ENCODE measurements at regions of chr12 and their contacts with region 1.

Region 1: GRCh38 chr12:116277393-116278278 is at the start of gene MED13L:
- DNase-seq: no peak
- ATAC-seq: peak; percentile 82
- H3K4me3 ChIP-seq: peak within 1 kb of the TSS; percentile 81
- H3K27ac ChIP-seq: peak within 1 kb of the TSS; percentile 43; the same call in 1 of the 2 replicates
- H3K4me1 ChIP-seq: no peaks in the 10 kb centered on the region
- H3K27me3 ChIP-seq: peaks cover 0 to 10% of the 10 kb centered on the region in 2 experiments; a peak in 2 of 4 replicates
- CTCF ChIP-seq: peak in 2 of 3 experiments; percentile 6 to 28; a peak in 2 of 6 replicates
- EP300 ChIP-seq: no peak
- POLR2A ChIP-seq: peak; percentile 75
- RAD21 ChIP-seq: 0 out of 2 replicates have a peak, but pooled peaks have one; percentile 25
- polyA plus RNA-seq, gene MED13L: 3.7 to 7.5 TPM

Region 2: GRCh38 chr12:116314477-116314876 is 36.8 kb after region 1 on chr12:
- CTCF ChIA-PET with region 1: no interaction called
- POLR2A ChIA-PET with region 1: no interaction called
- RAD21 ChIA-PET with region 1: no interaction called
- SMC1A ChIA-PET with region 1: no interaction called
- in situ Hi-C with region 1: no loop called
- intact Hi-C with region 1: loop called (anchors 2 kb)
- DNase-seq: no peak
- ATAC-seq: no peak
- H3K4me3 ChIP-seq: no peak overlapping the region
- H3K27ac ChIP-seq: no peak overlapping the region
- H3K4me1 ChIP-seq: peaks cover under 1% of the 10 kb centered on the region; the same call in 1 of the 2 replicates
- H3K27me3 ChIP-seq: peaks cover 2 to 3% of the 10 kb centered on the region in 2 experiments
- CTCF ChIP-seq: no peak
- EP300 ChIP-seq: no peak
- POLR2A ChIP-seq: no peak
- RAD21 ChIP-seq: no peak

Region 3: GRCh38 chr12:116358893-116359761 is 81.5 kb after region 1 on chr12:
- CTCF ChIA-PET with region 1: no interaction called
- POLR2A ChIA-PET with region 1: no interaction called
- RAD21 ChIA-PET with region 1: no interaction called
- SMC1A ChIA-PET with region 1: no interaction called
- in situ Hi-C with region 1: no loop called
- intact Hi-C with region 1: no loop called
- DNase-seq: no peak
- ATAC-seq: peak; percentile 88
- H3K4me3 ChIP-seq: no peak overlapping the region
- H3K27ac ChIP-seq: no peak overlapping the region; the same call in 1 of the 2 replicates
- H3K4me1 ChIP-seq: peaks cover 21% of the 10 kb centered on the region
- H3K27me3 ChIP-seq: no peaks in the 10 kb centered on the region
- CTCF ChIP-seq: no peak
- EP300 ChIP-seq: no peak
- POLR2A ChIP-seq: no peak
- RAD21 ChIP-seq: no peak

Region 4: GRCh38 chr12:116539905-116540482 is 262.4 kb after region 1 on chr12:
- CTCF ChIA-PET with region 1: no interaction called
- POLR2A ChIA-PET with region 1: no interaction called
- RAD21 ChIA-PET with region 1: no interaction called
- SMC1A ChIA-PET with region 1: no interaction called
- in situ Hi-C with region 1: no loop called
- intact Hi-C with region 1: loop called (anchors 2 kb)
- DNase-seq: no peak
- ATAC-seq: no peak
- H3K4me3 ChIP-seq: no peak overlapping the region
- H3K27ac ChIP-seq: no peak overlapping the region
- H3K4me1 ChIP-seq: peaks cover 34% of the 10 kb centered on the region
- H3K27me3 ChIP-seq: no peaks in the 10 kb centered on the region
- CTCF ChIP-seq: no peak
- EP300 ChIP-seq: no peak
- POLR2A ChIP-seq: no peak
- RAD21 ChIP-seq: no peak

Region 5: DNA sequence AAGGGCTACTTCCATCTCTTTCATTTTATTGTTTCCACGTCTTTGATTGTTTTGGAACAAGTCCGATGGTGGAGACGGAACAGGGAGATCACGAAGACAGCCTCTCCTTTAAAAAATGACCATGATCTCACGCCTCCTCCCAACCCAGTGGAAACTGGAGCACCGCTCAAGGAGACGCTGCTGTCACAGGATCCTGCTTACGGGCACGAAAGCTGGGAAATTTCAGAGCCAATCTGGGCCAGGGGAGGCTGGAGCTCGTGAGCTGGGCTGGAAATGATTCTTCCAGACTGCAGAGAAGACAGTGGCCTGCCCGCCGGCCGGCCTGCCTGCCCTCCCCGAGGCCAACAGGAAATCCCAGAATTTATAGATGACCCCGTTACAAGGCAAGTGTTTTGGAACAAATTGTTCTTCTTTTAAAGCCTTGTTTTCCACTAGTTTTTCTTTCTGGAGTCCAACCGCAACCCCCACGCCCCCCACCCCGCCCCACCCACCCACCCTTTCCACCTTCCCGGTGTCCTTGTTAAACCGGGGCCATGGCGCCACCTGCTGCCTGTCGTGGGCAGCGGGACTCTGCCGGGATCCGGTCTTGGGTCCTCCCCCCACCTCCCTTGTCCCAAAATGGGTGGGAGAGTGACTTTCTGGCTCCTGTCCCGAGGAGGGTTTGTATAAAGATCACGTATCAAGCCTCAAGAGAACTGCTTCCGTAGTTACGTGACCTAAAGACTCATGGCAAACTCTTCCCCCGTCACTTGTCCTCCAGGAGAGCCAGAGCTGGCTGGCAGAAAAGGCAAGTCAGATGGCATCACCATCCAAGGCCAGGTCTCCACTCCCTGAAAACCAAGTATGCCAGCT is 321.9 kb after region 1 on chr12:
- CTCF ChIA-PET with region 1: interaction called, 4 read pairs
- POLR2A ChIA-PET with region 1: no interaction called
- RAD21 ChIA-PET with region 1: interaction called, 4 read pairs
- SMC1A ChIA-PET with region 1: interaction called, 3 read pairs
- in situ Hi-C with region 1: no loop called
- intact Hi-C with region 1: loop called (anchors 5 kb)
- DNase-seq: peak; percentile 7
- ATAC-seq: peak; percentile 63
- H3K4me3 ChIP-seq: no peak overlapping the region
- H3K27ac ChIP-seq: no peak overlapping the region
- H3K4me1 ChIP-seq: peaks cover 3% of the 10 kb centered on the region; the same call in 1 of the 2 replicates
- H3K27me3 ChIP-seq: no peaks in the 10 kb centered on the region
- CTCF ChIP-seq: peak; percentile 41 to 57 (median 42)
- EP300 ChIP-seq: no peak
- POLR2A ChIP-seq: no peak
- RAD21 ChIP-seq: peak; percentile 75

Region 6: DNA sequence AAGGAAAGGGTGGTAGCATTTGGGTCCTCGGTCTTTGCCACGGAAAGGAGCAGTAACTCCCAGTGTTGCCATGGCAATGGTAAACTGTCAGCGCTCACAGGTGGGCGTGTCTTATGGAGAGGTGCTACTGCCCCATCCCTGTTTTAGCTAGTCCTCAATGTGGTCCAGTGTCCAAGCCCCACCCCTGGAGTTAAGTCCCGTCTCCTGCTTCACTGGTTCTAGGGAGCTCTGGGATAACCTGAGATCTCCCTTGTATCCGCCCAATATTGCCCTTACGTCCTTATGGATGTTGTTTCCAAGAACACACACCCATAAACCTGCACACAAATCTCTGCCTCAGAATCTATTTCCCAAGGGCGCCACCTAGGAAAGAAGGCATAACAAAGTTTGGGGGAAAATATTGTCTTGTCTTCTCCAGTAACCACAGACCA is 396.1 kb after region 1 on chr12:
- CTCF ChIA-PET with region 1: no interaction called
- POLR2A ChIA-PET with region 1: no interaction called
- RAD21 ChIA-PET with region 1: no interaction called
- SMC1A ChIA-PET with region 1: no interaction called
- in situ Hi-C with region 1: no loop called
- intact Hi-C with region 1: loop called (anchors 5 kb)
- DNase-seq: no peak
- ATAC-seq: no peak
- H3K4me3 ChIP-seq: no peak overlapping the region
- H3K27ac ChIP-seq: peak overlapping the region; percentile 51
- H3K4me1 ChIP-seq: peaks cover 23% of the 10 kb centered on the region
- H3K27me3 ChIP-seq: no peaks in the 10 kb centered on the region
- CTCF ChIP-seq: peak in 1 of 3 experiments; percentile 18; a peak in 1 of 6 replicates
- EP300 ChIP-seq: no peak
- POLR2A ChIP-seq: no peak
- RAD21 ChIP-seq: 0 out of 2 replicates have a peak, but pooled peaks have one; percentile 7

Region 7: DNA sequence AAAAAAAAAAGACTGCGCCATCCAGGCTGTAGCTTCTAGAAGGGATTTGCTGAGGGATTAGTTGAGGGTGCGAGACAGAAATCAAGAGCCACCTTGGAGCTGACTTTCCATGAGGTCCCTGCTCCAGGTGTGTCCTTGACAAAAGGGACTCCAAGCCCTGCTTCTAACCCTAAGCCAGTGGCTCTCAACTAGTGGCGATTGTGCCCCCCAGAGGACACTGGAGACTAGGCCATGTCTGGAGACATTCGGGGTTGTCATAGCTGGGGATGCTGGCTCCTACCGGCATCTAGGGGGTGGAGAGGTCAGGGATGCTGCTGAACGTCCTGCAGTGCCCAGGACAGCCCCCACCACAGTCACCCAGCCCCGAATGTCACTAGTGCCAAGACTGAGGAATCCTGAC is 419.7 kb after region 1 on chr12:
- CTCF ChIA-PET with region 1: interaction called, 3 read pairs
- POLR2A ChIA-PET with region 1: no interaction called
- RAD21 ChIA-PET with region 1: no interaction called
- SMC1A ChIA-PET with region 1: no interaction called
- in situ Hi-C with region 1: no loop called
- intact Hi-C with region 1: loop called (anchors 5 kb)
- DNase-seq: no peak
- ATAC-seq: peak; percentile 85
- H3K4me3 ChIP-seq: no peak overlapping the region
- H3K27ac ChIP-seq: no peak overlapping the region
- H3K4me1 ChIP-seq: peaks cover 13% of the 10 kb centered on the region
- H3K27me3 ChIP-seq: peaks cover 6 to 19% of the 10 kb centered on the region in 2 experiments
- CTCF ChIP-seq: peak; percentile 31 to 51 (median 39); a peak in 4 of 6 replicates
- EP300 ChIP-seq: no peak
- POLR2A ChIP-seq: no peak
- RAD21 ChIP-seq: peak; percentile 78